Psoas muscle (tissue), 8 donors: ENCODE measurements at regions of chr12 and their contacts with region 1.

Region 1: DNA sequence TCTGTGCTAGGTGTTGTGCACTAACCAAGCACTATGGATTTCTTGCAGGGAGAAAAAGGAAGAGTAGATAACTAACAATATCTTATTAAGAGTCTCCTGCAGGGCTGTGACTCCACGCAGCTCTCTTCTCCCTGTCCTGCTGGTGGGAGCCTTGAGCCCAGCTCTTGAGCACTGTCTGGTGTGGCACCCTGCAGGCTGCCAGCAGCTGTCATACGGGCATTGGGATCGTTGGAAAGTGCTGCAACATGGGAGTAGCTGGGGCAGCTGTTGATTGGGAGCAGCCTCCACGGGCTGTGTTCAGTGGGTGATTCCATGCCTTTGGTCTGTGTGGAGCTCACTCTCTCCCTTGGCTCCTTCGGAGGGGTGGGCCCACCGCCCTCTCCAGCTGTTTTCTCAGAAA is 125.3 kb downstream of the FBXL14 start:
- DNase-seq: no peak
- ATAC-seq: no peak
- H3K4me3 ChIP-seq: no peak overlapping the region
- H3K27ac ChIP-seq: no peak overlapping the region
- H3K4me1 ChIP-seq: peaks cover 7% of the 10 kb centered on the region
- H3K27me3 ChIP-seq: no peaks in the 10 kb centered on the region
- CTCF ChIP-seq: no peak

Region 2: DNA sequence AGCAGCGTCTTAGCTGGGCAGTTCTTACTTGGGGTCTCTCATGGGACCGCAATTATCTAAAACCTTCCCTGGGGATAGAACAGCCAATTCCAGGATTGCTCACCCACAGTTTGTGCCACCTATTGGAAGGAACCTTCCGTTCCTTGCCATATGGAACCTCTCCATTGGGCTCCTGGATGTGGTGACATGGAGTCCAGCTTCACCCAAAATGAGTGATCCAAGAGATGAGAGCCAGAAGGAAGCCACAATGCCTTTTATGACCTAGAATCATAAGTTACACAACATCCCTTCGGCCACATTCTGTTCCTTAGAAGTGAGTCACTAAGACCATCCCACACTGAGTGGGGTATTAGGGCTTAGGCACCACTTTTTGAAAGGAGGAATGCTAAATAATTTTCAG is 39.1 kb before region 1 on chr12:
- intact Hi-C with region 1: no loop called
- DNase-seq: no peak
- ATAC-seq: peak in 3 of 4 donors; percentile 56 to 79 (median 64)
- H3K4me3 ChIP-seq: no peak overlapping the region
- H3K27ac ChIP-seq: no peak overlapping the region
- H3K4me1 ChIP-seq: no peaks in the 10 kb centered on the region
- H3K27me3 ChIP-seq: no peaks in the 10 kb centered on the region
- CTCF ChIP-seq: no peak

Region 3: DNA sequence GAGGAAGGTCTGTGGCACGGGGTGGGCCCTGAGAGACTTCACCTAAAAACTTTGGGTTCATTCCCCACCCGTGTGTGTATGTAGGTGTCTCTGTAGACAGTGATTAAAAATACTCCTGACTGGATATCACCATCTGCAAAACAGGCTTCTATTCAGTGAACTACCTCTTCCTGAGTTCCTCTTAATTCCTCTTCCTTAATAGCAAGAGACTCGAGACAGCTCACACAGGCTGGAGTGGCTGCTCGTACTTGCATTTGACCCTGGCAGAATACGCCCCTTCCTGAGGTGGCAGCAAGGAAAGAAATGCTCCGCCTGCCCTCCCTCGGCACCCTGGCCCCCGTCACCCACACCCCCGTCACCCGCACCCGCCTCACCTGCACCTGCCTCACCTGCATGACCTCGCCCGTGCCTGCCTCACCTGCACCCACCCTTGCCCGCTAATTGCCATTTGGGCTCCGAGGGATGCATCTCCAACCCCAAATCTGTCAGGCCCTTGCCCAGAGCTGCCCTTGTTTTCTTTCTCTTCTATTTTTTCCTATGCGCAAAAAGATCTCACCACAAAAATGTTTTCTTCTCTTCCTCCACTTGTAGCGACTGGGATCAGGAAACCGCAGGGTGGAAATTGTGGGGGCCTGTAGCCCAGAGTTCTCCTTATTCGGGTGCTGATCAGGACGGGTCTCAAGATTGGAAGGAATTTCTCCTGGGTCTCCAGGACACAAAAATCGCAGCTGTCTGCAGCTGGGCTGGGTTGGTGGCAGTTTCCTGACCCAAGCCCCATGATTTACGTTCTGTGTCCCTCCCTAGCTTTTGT is 35.4 kb after region 1 on chr12:
- intact Hi-C with region 1: no loop called
- DNase-seq: no peak
- ATAC-seq: no peak
- H3K4me3 ChIP-seq: no peak overlapping the region
- H3K27ac ChIP-seq: no peak overlapping the region
- H3K4me1 ChIP-seq: peaks cover 24% of the 10 kb centered on the region
- H3K27me3 ChIP-seq: no peaks in the 10 kb centered on the region
- CTCF ChIP-seq: no peak

Region 4: DNA sequence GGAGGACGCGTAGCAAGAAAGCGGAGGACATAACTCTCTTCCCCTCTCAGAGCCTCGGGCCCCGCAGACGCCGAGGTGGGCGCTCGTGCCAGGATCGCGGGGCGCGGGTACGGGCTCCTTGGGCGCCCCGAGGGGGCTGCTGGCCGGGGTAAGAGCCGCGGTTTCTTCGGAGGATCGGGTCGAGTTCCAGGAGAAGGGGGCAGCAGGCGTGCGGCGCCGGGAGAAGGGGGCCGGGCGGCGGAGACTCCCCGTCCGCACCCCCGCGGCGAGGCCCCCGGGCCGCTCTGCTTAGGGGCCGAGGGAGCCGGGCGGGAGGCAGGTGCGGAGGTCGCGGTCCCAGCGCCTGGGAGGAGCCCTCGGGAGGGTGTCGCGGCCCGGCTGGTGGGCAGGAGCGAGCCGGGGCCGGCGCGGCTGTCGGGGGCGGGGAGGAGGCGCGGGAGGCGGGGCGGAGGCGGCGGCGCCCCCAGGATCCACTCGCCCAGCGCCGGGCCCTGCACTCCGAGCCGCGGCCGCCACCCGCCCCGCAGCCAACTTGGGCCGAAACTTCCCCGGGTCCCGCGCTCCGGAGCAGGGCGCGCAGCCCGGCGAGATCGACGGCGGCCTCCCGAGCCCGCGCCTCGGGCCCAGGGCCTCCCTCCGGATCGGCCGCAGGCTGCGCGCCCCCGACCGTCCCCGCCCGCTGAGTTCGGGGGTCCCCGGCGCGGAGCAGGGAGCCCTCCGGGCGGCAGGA is 61.0 kb after region 1 on chr12:
- intact Hi-C with region 1: loop called in 1 of 2 experiments (anchors 5 kb)
- DNase-seq: peak in 1 of 2 donors; percentile 22
- ATAC-seq: peak in 3 of 4 donors; percentile 25 to 34 (median 33)
- H3K4me3 ChIP-seq: peak overlapping the region; percentile 66
- H3K27ac ChIP-seq: no peak overlapping the region
- H3K4me1 ChIP-seq: peaks cover 9% of the 10 kb centered on the region
- H3K27me3 ChIP-seq: peaks cover 0 to 68% (median 28%) of the 10 kb centered on the region in 3 donors
- CTCF ChIP-seq: no peak

Region 5: DNA sequence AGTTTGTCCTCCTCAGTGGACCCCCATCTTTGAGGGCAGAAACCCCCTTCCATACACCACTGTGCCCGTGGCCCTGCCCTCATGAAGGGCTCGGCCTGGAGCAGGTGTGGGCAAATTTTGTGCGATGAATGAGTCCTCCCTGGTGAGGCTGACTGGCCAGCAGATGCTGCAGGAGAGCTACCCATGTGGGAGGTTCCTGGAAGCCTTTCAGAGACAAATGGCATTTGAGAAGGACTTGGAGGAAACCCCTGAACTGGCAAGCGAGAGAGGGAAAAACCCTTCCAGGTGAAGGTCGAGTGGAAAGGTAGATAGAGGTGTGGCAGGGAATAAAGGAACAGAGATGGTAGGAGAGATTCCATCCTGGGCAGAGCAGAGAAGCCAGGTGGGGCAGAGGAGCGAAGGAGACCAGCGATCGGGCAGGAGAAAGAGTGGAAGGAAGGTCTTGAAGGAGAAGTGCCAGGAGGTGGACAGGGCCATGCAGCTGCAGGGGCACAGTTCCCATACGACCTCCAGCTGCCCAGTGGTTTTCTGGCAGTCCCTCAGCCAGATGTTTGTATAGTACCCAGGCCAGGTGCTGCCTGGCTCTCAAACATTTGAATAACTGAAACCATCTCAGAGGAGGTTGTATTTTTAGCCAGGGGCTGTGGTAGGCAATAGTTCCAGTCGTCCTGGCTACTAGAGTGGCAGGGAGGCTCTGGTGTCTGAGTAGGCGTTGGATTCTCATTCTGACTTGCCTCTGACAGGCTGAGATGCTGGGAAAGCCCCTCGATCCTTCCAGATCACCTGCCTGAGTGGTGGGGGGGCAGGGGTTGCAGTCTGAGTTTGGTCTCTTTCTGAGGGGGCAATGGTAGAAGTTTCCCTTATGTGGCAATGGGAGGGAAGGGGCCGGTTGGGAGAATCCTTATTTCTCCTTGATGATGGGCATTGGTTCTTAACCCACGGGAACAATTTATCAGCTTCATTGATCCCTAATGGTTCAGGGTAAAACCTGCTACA is 85.2 kb after region 1 on chr12:
- intact Hi-C with region 1: no loop called
- DNase-seq: no peak
- ATAC-seq: no peak
- H3K4me3 ChIP-seq: no peak overlapping the region
- H3K27ac ChIP-seq: no peak overlapping the region
- H3K4me1 ChIP-seq: no peaks in the 10 kb centered on the region
- H3K27me3 ChIP-seq: peaks cover 0 to 2% (median 0%) of the 10 kb centered on the region in 3 donors
- CTCF ChIP-seq: no peak

Region 6: GRCh38 chr12:2013527-2014223 is 544.6 kb after region 1 on chr12:
- intact Hi-C with region 1: no loop called
- DNase-seq: no peak
- ATAC-seq: no peak
- H3K4me3 ChIP-seq: no peak overlapping the region
- H3K27ac ChIP-seq: peak overlapping the region; percentile 1
- H3K4me1 ChIP-seq: peaks cover 3% of the 10 kb centered on the region
- H3K27me3 ChIP-seq: peaks cover 0 to 2% (median 0%) of the 10 kb centered on the region in 3 donors
- CTCF ChIP-seq: no peak